CD8-positive, alpha-beta T cell (primary cell): ENCODE measurements at regions of chrX and their contacts with region 1.

Region 1: DNA sequence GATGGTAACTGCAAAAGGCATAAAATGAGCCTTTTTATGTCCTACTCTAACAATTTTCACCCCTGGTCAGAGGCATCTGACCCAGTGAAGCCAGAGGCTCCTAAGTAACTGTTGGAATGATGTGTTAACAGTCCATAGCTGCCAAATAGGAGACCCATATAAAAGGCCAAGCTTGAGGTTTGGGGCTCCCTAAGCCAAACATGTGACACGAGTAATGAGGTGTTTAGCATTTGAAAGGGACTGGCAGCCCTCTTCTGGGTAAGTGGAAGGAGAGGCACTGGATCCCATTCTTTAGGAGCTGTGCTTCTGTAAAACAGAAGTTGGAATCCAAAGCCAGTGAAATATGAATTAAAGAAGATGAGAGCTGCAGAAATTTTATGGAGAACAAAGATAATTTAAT is 100.6 kb upstream of the PNPLA4 start:
- DNase-seq: no peak
- ATAC-seq: no peak
- H3K4me3 ChIP-seq: no peak overlapping the region
- H3K4me3 Mint-ChIP-seq: no peak overlapping the region
- H3K27ac ChIP-seq: no peak overlapping the region
- H3K27ac Mint-ChIP-seq: no peak overlapping the region
- H3K4me1 ChIP-seq: no peaks in the 10 kb centered on the region
- H3K4me1 Mint-ChIP-seq: no peaks in the 10 kb centered on the region
- H3K27me3 ChIP-seq: no peaks in the 10 kb centered on the region
- H3K27me3 Mint-ChIP-seq: no peaks in the 10 kb centered on the region
- CTCF ChIP-seq: no peak

Region 2: DNA sequence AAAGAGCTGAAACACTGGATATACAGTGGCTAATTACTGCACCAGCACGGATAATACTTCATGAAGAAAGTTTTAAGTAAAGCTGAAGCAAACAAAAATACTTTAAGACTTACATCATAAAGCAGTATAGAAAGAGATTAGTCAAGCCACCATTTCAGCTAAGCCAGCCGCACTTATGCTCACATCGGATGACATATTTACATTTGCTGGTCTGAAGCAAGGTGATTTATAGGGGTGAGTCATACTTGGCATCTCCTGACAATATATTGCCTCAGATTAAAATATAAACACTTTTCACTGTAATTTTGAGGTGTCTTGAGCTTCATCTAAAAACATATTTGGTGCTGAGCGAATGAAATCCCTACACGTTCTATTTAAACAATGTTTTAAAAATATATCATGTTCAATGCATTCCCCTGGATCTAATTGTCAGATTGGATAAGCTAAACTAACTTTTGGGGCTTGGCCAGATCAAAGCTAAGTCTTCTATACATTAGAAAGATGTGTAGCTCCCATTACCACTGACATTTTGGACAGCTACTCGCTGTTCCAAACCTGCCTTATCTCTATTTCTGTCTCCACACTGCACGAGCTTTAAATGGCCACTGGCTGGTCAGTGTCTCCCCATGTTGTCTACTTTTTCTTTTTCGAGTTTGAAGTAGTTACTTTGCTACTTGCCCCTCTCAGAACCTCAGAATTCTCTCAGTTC is 40.1 kb after region 1 on chrX:
- CTCF ChIA-PET with region 1: no interaction called
- POLR2A ChIA-PET with region 1: no interaction called
- intact Hi-C with region 1: loop called in 1 of 2 experiments (anchors 2 kb)
- DNase-seq: no peak
- ATAC-seq: no peak
- H3K4me3 ChIP-seq: no peak overlapping the region
- H3K4me3 Mint-ChIP-seq: no peak overlapping the region
- H3K27ac ChIP-seq: no peak overlapping the region
- H3K27ac Mint-ChIP-seq: no peak overlapping the region
- H3K4me1 ChIP-seq: no peaks in the 10 kb centered on the region
- H3K4me1 Mint-ChIP-seq: no peaks in the 10 kb centered on the region
- H3K27me3 ChIP-seq: no peaks in the 10 kb centered on the region
- H3K27me3 Mint-ChIP-seq: no peaks in the 10 kb centered on the region
- CTCF ChIP-seq: no peak

Region 3: GRCh38 chrX:8981723-8982122 is 953.9 kb after region 1 on chrX:
- CTCF ChIA-PET with region 1: no interaction called
- POLR2A ChIA-PET with region 1: no interaction called
- intact Hi-C with region 1: no loop called
- DNase-seq: peak in 3 of 9 experiments; percentile 22 to 32 (median 28)
- ATAC-seq: peak; percentile 70
- H3K4me3 ChIP-seq: no peak overlapping the region
- H3K4me3 Mint-ChIP-seq: no peak overlapping the region
- H3K27ac ChIP-seq: no peak overlapping the region
- H3K27ac Mint-ChIP-seq: peak overlapping the region; percentile 23
- H3K4me1 ChIP-seq: peaks cover 9% of the 10 kb centered on the region
- H3K4me1 Mint-ChIP-seq: peaks cover 22% of the 10 kb centered on the region
- H3K27me3 ChIP-seq: no peaks in the 10 kb centered on the region
- H3K27me3 Mint-ChIP-seq: peaks cover 2% of the 10 kb centered on the region
- CTCF ChIP-seq: no peak